CD4-positive, alpha-beta memory T cell (primary cell): ENCODE measurements at regions of chr12 and their contacts with region 1.

Region 1: DNA sequence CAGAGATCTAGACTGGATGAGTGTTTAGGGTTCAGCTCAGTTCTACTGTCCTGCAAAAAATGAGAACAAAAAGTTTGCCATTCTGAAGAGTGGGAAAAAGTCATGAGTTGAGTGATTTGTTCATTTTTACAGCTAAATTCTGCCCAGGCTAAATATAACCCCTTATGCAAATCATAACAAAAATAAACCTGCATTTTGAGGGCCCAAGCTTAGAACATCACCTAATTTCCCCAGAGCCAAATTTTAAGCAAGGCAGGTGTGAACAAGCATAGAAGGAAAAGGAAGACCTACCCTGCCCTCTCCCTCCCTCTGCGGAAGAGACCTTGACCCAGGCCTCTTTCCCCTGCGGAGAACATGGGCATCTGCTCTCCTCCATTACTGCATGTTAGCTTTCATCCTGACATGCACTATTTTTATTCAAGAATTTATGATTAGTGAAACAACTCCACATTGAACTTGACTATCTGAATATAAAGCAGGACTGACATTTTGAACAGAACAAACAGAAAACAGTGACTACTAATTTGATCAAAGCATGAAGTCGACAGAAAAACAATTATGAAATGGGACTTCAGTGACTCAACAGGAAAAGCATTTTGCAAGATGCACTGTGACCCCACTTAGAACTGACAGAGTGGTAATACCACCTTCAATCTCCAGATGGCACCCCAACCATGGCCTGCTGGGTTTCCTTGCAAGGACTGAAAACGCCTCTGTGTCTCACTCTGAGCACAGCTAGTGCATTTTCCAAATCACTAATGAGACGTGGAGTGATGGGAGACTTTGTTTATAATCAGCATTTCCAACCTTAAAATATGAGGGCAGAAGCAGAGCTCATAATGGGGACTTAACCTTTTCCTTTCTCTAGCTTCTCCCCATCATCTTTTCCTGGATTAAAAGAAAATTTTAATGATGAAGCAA is 30.9 kb upstream of the SELPLG start:
- DNase-seq: peak; percentile 79 to 85 (median 81)
- H3K4me3 ChIP-seq: no peak overlapping the region
- H3K4me3 Mint-ChIP-seq: peak overlapping the region in 1 of 8 donors; percentile 20
- H3K27ac ChIP-seq: no peak overlapping the region
- H3K27ac Mint-ChIP-seq: peak overlapping the region; percentile 78 to 93 (median 86)
- H3K4me1 ChIP-seq: peaks cover 14% of the 10 kb centered on the region
- H3K4me1 Mint-ChIP-seq: peaks cover 9 to 10% (median 9%) of the 10 kb centered on the region in 4 donors
- H3K27me3 ChIP-seq: no peaks in the 10 kb centered on the region
- H3K27me3 Mint-ChIP-seq: no peaks in the 10 kb centered on the region

Region 2: DNA sequence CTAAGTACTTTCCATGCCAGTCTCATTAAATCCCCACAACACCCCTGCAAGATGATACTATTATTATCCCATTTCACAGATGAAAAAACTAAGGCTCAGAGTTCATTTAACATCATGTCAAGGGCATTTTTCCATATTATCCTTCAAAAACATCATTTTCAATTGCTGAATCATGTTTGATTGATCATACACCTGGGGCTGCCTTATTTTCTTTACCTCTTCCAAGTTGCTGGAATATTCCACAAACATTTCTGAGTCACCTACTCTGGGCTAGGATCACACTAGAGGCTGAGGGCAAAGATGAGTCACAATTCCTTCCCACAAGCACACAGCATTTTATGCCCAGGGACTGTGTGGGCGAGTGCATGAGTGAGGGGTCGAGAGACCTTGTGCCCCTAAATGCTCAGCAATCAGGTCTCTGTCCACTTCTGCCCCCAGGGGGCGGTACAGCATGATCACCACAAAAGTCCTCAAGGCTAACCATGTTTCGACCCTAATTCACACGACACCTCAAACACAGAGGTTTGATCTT is 52.6 kb before region 1 on chr12:
- CTCF ChIA-PET with region 1: interaction called, 64 read pairs
- POLR2A ChIA-PET with region 1: interaction called, 9 read pairs
- intact Hi-C with region 1: no loop called
- DNase-seq: peak; percentile 45 to 65 (median 51)
- H3K4me3 ChIP-seq: no peak overlapping the region
- H3K4me3 Mint-ChIP-seq: no peak overlapping the region
- H3K27ac ChIP-seq: no peak overlapping the region
- H3K27ac Mint-ChIP-seq: peak overlapping the region in 3 of 7 donors; percentile 23 to 75 (median 53)
- H3K4me1 ChIP-seq: peaks cover 7% of the 10 kb centered on the region
- H3K4me1 Mint-ChIP-seq: peaks cover 16 to 29% (median 26%) of the 10 kb centered on the region in 4 donors
- H3K27me3 ChIP-seq: no peaks in the 10 kb centered on the region
- H3K27me3 Mint-ChIP-seq: no peaks in the 10 kb centered on the region

Region 3: DNA sequence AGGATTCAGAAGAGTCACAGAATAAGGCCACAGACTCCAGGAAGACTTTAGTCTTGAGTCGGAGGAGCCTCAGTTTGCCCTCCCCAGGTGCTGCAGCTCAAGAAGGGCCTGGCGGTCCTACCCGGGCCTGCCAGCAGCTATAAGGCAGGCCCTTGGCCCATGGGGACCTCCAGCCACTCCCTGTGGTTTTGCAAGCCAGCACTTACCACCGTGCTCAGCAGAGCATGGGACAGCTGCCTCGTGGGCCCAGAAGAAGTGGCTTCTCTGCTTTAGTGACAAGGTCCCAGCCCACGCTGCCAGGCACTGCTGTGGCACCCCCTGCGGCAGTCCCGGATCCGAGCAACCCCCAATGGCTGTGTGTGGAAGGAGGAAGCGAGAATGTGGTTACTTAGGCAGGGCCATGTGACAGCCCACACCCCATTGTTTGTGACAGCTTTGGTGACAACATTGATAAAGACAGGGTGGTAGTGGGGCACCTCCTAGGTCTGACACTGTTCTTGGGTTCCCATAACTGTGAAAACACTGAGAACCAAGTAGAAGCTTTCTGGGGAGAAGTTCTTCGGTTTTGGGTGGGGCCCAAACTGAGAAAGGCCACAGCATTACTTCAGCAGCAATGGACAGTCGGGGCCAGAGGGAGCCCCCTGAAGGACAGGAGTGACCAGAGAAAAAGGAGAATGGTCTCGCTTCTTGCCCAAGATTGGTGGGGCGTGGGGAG is 30.9 kb before region 1 on chr12 and contains the start of gene SELPLG:
- CTCF ChIA-PET with region 1: interaction called, 82 read pairs
- POLR2A ChIA-PET with region 1: interaction called, 48 read pairs
- intact Hi-C with region 1: loop called (anchors 1 kb)
- DNase-seq: peak; percentile 91 to 97 (median 94)
- H3K4me3 ChIP-seq: peak within 1 kb of the TSS; percentile 92 to 95
- H3K4me3 Mint-ChIP-seq: peak within 1 kb of the TSS; percentile 94 to 100 (median 99)
- H3K27ac ChIP-seq: peak within 1 kb of the TSS; percentile 92
- H3K27ac Mint-ChIP-seq: peak within 1 kb of the TSS; percentile 99 to 100 (median 100)
- H3K4me1 ChIP-seq: peaks cover 65% of the 10 kb centered on the region
- H3K4me1 Mint-ChIP-seq: peaks cover 40 to 84% (median 54%) of the 10 kb centered on the region in 4 donors
- H3K27me3 ChIP-seq: no peaks in the 10 kb centered on the region
- H3K27me3 Mint-ChIP-seq: no peaks in the 10 kb centered on the region
- total RNA-seq, gene SELPLG: 175 to 176 TPM

Region 4: DNA sequence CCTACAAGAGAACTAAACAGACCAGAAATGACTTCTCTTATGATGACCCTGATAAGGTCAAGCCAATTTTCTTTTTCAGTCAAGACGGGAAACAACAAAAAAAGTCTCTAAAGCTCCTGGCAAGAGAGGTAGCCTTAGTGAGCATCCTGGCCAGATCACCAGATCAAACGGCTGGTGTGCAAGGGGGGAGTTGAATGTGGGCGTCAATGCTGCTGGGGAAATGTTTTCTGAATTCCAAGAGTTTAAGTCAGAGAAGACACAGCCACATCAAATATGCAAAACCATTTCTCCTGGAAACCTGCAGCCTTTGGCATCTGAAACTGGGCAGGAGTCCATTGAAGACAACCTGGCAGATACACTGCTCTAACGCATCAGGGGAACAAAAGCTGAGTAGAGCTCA is 14.9 kb before region 1 on chr12:
- CTCF ChIA-PET with region 1: interaction called, 26 read pairs
- POLR2A ChIA-PET with region 1: interaction called, 5 read pairs
- intact Hi-C with region 1: no loop called
- DNase-seq: no peak
- H3K4me3 ChIP-seq: no peak overlapping the region
- H3K4me3 Mint-ChIP-seq: no peak overlapping the region
- H3K27ac ChIP-seq: no peak overlapping the region
- H3K27ac Mint-ChIP-seq: peak overlapping the region in 3 of 7 donors; percentile 0 to 48 (median 3)
- H3K4me1 ChIP-seq: peaks cover 13% of the 10 kb centered on the region
- H3K4me1 Mint-ChIP-seq: peaks cover 17 to 26% (median 21%) of the 10 kb centered on the region in 4 donors
- H3K27me3 ChIP-seq: no peaks in the 10 kb centered on the region
- H3K27me3 Mint-ChIP-seq: no peaks in the 10 kb centered on the region

Region 5: GRCh38 chr12:108691175-108691997 is 26.8 kb after region 1 on chr12:
- CTCF ChIA-PET with region 1: interaction called, 35 read pairs
- POLR2A ChIA-PET with region 1: interaction called, 3 read pairs
- intact Hi-C with region 1: loop called (anchors 2 kb)
- DNase-seq: peak; percentile 33 to 83 (median 38)
- H3K4me3 ChIP-seq: peak overlapping the region in 1 of 2 donors; percentile 56
- H3K4me3 Mint-ChIP-seq: peak overlapping the region; percentile 48 to 85 (median 78)
- H3K27ac ChIP-seq: peak overlapping the region; percentile 27
- H3K27ac Mint-ChIP-seq: peak overlapping the region; percentile 77 to 90 (median 86)
- H3K4me1 ChIP-seq: peaks cover 46% of the 10 kb centered on the region
- H3K4me1 Mint-ChIP-seq: peaks cover 37 to 66% (median 54%) of the 10 kb centered on the region in 4 donors
- H3K27me3 ChIP-seq: no peaks in the 10 kb centered on the region
- H3K27me3 Mint-ChIP-seq: no peaks in the 10 kb centered on the region

Region 6: DNA sequence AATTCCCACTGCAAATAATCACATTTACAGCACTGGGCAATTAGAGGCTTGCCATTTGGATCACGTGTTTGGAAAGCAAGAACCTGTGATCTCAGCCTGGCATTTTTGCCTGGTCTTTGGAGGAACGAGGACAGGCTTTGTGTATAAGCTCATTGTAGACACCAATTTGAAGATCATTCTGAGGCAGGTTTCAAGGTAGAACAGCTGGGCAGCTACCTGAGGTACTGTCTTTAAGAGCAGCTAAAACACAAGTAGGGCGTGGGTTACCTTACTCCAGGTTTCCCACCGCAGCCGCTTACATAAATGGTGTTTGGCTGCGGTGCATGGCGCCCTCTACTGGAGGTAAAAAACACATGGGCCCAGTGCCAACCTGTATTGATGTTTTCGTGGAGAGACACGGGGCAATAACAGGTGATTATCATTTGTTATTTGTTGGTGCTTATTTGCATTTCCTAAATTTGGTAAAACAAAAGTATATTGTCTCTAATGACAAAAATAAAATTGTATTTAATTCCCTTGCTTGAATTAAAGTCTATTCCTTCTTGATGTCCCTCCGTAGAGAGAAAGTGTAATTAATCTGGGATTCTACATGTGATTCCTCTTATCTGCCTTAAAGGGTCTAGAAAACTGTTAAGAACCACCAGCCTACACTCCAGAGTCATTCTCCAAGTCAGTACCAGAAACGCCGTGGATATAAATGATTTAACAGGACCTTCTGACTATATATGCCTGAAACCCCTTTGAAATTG is 286.6 kb after region 1 on chr12:
- CTCF ChIA-PET with region 1: interaction called, 18 read pairs
- POLR2A ChIA-PET with region 1: interaction called, 3 read pairs
- intact Hi-C with region 1: no loop called
- DNase-seq: peak; percentile 68 to 76 (median 71)
- H3K4me3 ChIP-seq: no peak overlapping the region
- H3K4me3 Mint-ChIP-seq: peak overlapping the region in 2 of 8 donors; percentile 4 to 34
- H3K27ac ChIP-seq: no peak overlapping the region
- H3K27ac Mint-ChIP-seq: no peak overlapping the region
- H3K4me1 ChIP-seq: peaks cover 7% of the 10 kb centered on the region
- H3K4me1 Mint-ChIP-seq: peaks cover 0 to 5% (median 1%) of the 10 kb centered on the region in 4 donors
- H3K27me3 ChIP-seq: no peaks in the 10 kb centered on the region
- H3K27me3 Mint-ChIP-seq: peaks cover 10 to 13% of the 10 kb centered on the region in 2 donors